ENCODE measurements at regions of chr3 and their contacts with region 1.

Region 1: DNA sequence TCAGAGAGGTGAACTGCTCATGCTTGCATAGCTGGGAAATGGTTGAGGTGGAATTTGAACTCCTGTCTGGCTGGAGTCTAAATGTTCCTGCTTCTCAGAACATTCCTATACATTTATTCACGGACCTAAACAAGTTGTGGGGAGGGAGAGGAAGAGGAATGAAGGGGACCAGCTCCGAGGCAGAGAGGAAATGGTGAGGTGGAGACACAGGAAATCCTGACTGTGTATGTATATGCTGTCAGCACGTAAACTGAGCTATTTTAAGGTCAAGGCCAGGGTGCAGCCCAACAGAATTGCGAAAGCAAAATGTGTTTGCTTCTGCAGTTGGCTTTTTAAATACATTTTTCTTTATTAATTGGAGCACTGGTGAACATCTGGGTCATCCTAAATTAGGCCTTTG is 74.1 kb upstream of the POMGNT2 start:
- DNase-seq: peak; percentile 66
- H3K4me3 Mint-ChIP-seq: peak overlapping the region; percentile 48
- H3K27ac Mint-ChIP-seq: peak overlapping the region; percentile 93
- H3K4me1 Mint-ChIP-seq: peaks cover 48% of the 10 kb centered on the region
- H3K27me3 Mint-ChIP-seq: no peaks in the 10 kb centered on the region

Region 2: GRCh38 chr3:43086460-43087165 is 93.4 kb before region 1 on chr3:
- CTCF ChIA-PET with region 1: no interaction called
- POLR2A ChIA-PET with region 1: no interaction called
- DNase-seq: no peak
- H3K4me3 Mint-ChIP-seq: no peak overlapping the region
- H3K27ac Mint-ChIP-seq: no peak overlapping the region
- H3K4me1 Mint-ChIP-seq: peaks cover 2% of the 10 kb centered on the region
- H3K27me3 Mint-ChIP-seq: no peaks in the 10 kb centered on the region

Region 3: DNA sequence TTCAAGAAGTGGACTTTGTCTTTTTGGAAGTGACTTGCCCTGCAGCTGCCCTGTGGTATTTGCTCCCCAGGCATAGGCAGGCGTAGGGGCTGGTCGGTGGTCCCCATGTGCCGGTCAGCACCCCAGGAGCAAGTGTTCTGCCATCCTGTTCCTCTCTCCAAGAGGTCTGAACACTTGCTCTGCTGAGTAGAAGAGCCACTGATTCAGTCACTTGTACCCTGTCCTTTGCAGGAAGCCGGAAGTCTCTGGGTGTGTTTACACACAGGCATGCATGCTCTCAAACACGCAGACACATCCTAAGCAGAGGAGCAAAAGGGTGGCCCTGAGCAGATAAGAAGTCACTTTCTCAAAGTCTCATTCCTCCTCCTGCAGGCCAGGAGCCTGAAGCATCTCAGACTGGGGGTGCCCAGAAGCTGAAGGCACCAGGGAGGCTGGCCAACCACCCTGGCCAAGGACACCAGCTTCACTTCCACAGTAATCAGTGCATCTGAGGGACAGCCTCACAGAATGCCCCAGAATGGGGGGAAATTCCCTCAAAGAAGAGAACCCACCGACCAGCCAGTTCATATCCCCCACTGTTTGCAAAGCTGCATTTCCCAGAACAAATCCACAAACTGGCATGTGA is 14.6 kb after region 1 on chr3:
- CTCF ChIA-PET with region 1: interaction called, 4 read pairs
- POLR2A ChIA-PET with region 1: interaction called, 13 read pairs
- DNase-seq: peak; percentile 67
- H3K4me3 Mint-ChIP-seq: peak overlapping the region; percentile 50
- H3K27ac Mint-ChIP-seq: peak overlapping the region; percentile 95
- H3K4me1 Mint-ChIP-seq: peaks cover 54% of the 10 kb centered on the region
- H3K27me3 Mint-ChIP-seq: peaks cover 20% of the 10 kb centered on the region

Measured in activated CD4-positive, alpha-beta memory T cell treated with anti-CD3 and anti-CD28 coated beads, Interleukin-2, amount 10 ng/mL, durations not matched to agents 7 days and 5 days (primary cell).